ENCODE measurements at regions of chr9 and their contacts with region 1.

Region 1: GRCh38 chr9:35367451-35367850 is 122.5 kb upstream of the RUSC2 start:
- DNase-seq: peak; percentile 93
- ATAC-seq: peak; percentile 98
- H3K4me3 ChIP-seq: no peak overlapping the region
- H3K27ac ChIP-seq: no peak overlapping the region
- H3K4me1 ChIP-seq: peaks cover 10% of the 10 kb centered on the region
- H3K27me3 ChIP-seq: no peaks in the 10 kb centered on the region
- CTCF ChIP-seq: no peak
- POLR2A ChIP-seq: no peak
- RAD21 ChIP-seq: no peak

Region 2: DNA sequence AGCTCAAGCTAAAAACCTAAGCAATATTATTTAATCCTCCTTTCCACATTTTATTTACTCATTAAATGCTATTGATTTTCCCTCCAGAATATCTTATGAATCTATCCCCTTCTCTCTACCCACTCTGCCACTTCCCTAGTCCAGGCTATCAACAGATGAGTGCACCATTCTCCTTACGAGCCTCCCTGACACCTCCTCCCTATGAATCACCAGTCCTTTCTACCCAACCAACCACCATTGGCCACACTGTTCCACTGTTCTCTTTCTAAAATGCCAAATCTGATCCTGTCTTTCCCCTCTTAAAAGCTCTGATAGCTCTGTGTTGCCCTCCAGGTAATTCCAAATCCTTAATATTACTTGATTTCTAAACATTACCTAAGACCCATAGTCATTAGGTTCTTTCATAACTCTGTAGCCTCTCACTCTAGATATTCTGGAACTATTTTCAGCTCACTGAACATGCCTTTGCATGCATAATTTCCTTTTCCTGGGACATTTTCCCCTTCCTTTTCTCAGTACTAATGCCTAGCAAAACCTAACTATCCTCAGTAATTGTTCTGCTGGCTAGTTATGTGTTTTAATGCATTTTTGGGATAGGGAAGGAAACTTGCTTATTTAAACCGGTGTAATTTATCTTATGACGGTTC is 79.3 kb before region 1 on chr9:
- CTCF ChIA-PET with region 1: no interaction called
- POLR2A ChIA-PET with region 1: no interaction called
- dilution Hi-C with region 1: no loop called
- in situ Hi-C with region 1: no loop called
- intact Hi-C with region 1: loop called (anchors 10 kb)
- DNase-seq: peak; percentile 24
- ATAC-seq: peak; percentile 32; the same call in 1 of the 2 replicates
- H3K4me3 ChIP-seq: no peak overlapping the region
- H3K27ac ChIP-seq: no peak overlapping the region
- H3K4me1 ChIP-seq: 0 out of 2 replicates have a peak, but pooled peaks cover 1% of the 10 kb centered on the region
- H3K27me3 ChIP-seq: no peaks in the 10 kb centered on the region
- CTCF ChIP-seq: no peak
- POLR2A ChIP-seq: no peak
- RAD21 ChIP-seq: no peak

Region 3: GRCh38 chr9:35518226-35518821 is 150.9 kb after region 1 on chr9:
- CTCF ChIA-PET with region 1: no interaction called
- POLR2A ChIA-PET with region 1: no interaction called
- dilution Hi-C with region 1: no loop called
- in situ Hi-C with region 1: no loop called
- intact Hi-C with region 1: no loop called
- DNase-seq: peak; percentile 94
- ATAC-seq: peak; percentile 68
- H3K4me3 ChIP-seq: no peak overlapping the region
- H3K27ac ChIP-seq: peak overlapping the region; percentile 94
- H3K4me1 ChIP-seq: peaks cover 42% of the 10 kb centered on the region
- H3K27me3 ChIP-seq: no peaks in the 10 kb centered on the region
- CTCF ChIP-seq: no peak
- POLR2A ChIP-seq: peak; percentile 49; the same call in 1 of the 2 replicates
- RAD21 ChIP-seq: no peak

Measured in IMR-90 (cell line).